ENCODE measurements at regions of chr5 and their contacts with region 1.

Region 1: GRCh38 chr5:150486402-150487198 is 21.3 kb upstream of the NDST1 start:
- DNase-seq: peak; percentile 96
- H3K4me3 ChIP-seq: peak overlapping the region; percentile 99
- H3K4me3 Mint-ChIP-seq: peak overlapping the region; percentile 66
- H3K27ac Mint-ChIP-seq: peak overlapping the region; percentile 13
- H3K4me1 ChIP-seq: peaks cover 58% of the 10 kb centered on the region
- H3K4me1 Mint-ChIP-seq: peaks cover 57% of the 10 kb centered on the region
- H3K27me3 ChIP-seq: no peaks in the 10 kb centered on the region
- H3K27me3 Mint-ChIP-seq: no peaks in the 10 kb centered on the region
- CTCF ChIP-seq: peak in 1 of 2 experiments; percentile 1

Region 2: GRCh38 chr5:150436141-150436680 is 50.4 kb before region 1 on chr5:
- CTCF ChIA-PET with region 1: no interaction called
- POLR2A ChIA-PET with region 1: no interaction called
- intact Hi-C with region 1: no loop called
- DNase-seq: peak; percentile 89 to 92
- H3K4me3 ChIP-seq: no peak overlapping the region
- H3K4me3 Mint-ChIP-seq: no peak overlapping the region
- H3K27ac Mint-ChIP-seq: no peak overlapping the region
- H3K4me1 ChIP-seq: no peaks in the 10 kb centered on the region
- H3K4me1 Mint-ChIP-seq: no peaks in the 10 kb centered on the region
- H3K27me3 ChIP-seq: no peaks in the 10 kb centered on the region
- H3K27me3 Mint-ChIP-seq: no peaks in the 10 kb centered on the region
- CTCF ChIP-seq: peak; percentile 88 to 90

Region 3: GRCh38 chr5:150498501-150498900 is 11.9 kb after region 1 on chr5:
- CTCF ChIA-PET with region 1: interaction called, 3 read pairs
- POLR2A ChIA-PET with region 1: no interaction called
- intact Hi-C with region 1: loop called (anchors 1 kb)
- DNase-seq: no peak
- H3K4me3 ChIP-seq: no peak overlapping the region
- H3K4me3 Mint-ChIP-seq: no peak overlapping the region
- H3K27ac Mint-ChIP-seq: peak overlapping the region; percentile 1
- H3K4me1 ChIP-seq: peaks cover 41% of the 10 kb centered on the region
- H3K4me1 Mint-ChIP-seq: peaks cover 42% of the 10 kb centered on the region
- H3K27me3 ChIP-seq: no peaks in the 10 kb centered on the region
- H3K27me3 Mint-ChIP-seq: no peaks in the 10 kb centered on the region
- CTCF ChIP-seq: no peak

Region 4: DNA sequence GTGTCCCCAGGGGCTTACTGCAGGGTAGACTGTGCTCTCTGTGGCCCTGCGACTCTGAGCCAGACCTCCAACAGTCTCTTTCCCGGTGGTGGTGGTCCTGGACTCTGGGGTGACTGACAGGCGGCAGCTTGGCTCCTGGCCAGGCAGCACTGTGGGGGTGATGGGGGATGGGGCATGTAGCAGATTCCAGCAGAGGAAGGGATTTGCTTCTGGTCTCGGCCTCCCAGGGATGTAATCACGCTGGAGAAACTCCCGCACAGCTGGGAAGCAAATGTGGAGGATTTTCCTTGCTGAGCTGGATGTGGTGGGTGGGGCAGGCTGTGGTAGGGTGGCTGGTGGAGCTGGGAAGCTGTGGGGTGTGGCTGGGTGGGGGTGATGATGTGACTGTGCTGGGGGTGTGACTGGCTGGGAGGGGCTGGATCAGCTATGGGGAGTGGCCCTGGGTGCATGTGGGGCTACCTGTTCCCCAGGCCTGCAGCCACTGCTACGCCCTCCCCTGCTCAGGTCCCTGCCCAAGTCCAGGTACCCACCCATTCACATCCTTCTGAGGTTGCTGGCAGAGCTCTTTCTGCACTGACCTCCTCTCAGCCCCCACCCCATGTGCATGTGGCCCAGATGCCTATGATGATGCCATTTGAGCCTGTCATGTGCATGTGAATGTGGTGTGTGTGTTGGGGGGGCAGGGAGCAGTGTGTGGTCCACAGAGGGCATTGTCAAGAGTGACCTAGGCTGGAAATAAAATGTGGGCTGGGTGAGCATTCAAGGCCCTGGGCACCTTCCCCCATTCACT is 25.2 kb after region 1 on chr5:
- CTCF ChIA-PET with region 1: interaction called, 3 read pairs
- POLR2A ChIA-PET with region 1: no interaction called
- intact Hi-C with region 1: loop called (anchors 1 kb)
- DNase-seq: peak; percentile 61 to 78
- H3K4me3 ChIP-seq: no peak overlapping the region
- H3K4me3 Mint-ChIP-seq: peak overlapping the region; percentile 75
- H3K27ac Mint-ChIP-seq: peak overlapping the region; percentile 96
- H3K4me1 ChIP-seq: peaks cover 71% of the 10 kb centered on the region
- H3K4me1 Mint-ChIP-seq: peaks cover 57% of the 10 kb centered on the region
- H3K27me3 ChIP-seq: no peaks in the 10 kb centered on the region
- H3K27me3 Mint-ChIP-seq: no peaks in the 10 kb centered on the region
- CTCF ChIP-seq: no peak

Region 5: GRCh38 chr5:150542933-150543445 is 56.4 kb after region 1 on chr5:
- CTCF ChIA-PET with region 1: interaction called, 3 read pairs
- POLR2A ChIA-PET with region 1: interaction called, 5 read pairs
- intact Hi-C with region 1: loop called (anchors 1 kb)
- DNase-seq: peak; percentile 86 to 94
- H3K4me3 ChIP-seq: no peak overlapping the region
- H3K4me3 Mint-ChIP-seq: peak overlapping the region; percentile 42
- H3K27ac Mint-ChIP-seq: peak overlapping the region; percentile 81
- H3K4me1 ChIP-seq: peaks cover 34% of the 10 kb centered on the region
- H3K4me1 Mint-ChIP-seq: peaks cover 25% of the 10 kb centered on the region
- H3K27me3 ChIP-seq: no peaks in the 10 kb centered on the region
- H3K27me3 Mint-ChIP-seq: no peaks in the 10 kb centered on the region
- CTCF ChIP-seq: no peak

Region 6: GRCh38 chr5:150554857-150555256 is 68.3 kb after region 1 on chr5:
- CTCF ChIA-PET with region 1: no interaction called
- POLR2A ChIA-PET with region 1: no interaction called
- intact Hi-C with region 1: no loop called
- DNase-seq: no peak
- H3K4me3 ChIP-seq: no peak overlapping the region
- H3K4me3 Mint-ChIP-seq: no peak overlapping the region
- H3K27ac Mint-ChIP-seq: no peak overlapping the region
- H3K4me1 ChIP-seq: no peaks in the 10 kb centered on the region
- H3K4me1 Mint-ChIP-seq: peaks cover 2% of the 10 kb centered on the region
- H3K27me3 ChIP-seq: no peaks in the 10 kb centered on the region
- H3K27me3 Mint-ChIP-seq: no peaks in the 10 kb centered on the region
- CTCF ChIP-seq: no peak